PC-3 (cell line): ENCODE measurements at regions of chr21 and their contacts with region 1.

Region 1: DNA sequence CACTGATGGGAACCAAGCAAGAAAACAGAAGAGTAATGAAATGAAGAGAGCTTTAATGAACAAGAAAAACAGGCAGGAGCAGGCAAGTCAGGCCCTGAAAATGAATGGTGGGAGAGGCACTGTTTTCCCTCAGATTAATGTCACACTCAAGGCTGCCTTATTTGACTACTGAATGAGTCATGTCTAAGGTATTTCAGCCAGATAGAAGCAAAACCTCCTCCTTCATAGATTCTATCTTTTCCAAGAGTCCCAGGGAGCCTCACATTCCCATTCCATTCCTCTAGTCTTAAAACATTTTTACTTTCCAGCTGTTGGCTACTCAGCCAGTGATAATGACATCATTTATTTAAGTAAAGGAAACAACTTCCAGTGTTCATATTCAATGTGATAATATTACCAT is 228.4 kb upstream of the NRIP1 start:
- DNase-seq: peak; percentile 94
- ATAC-seq: peak; percentile 99
- H3K4me3 ChIP-seq: no peak overlapping the region
- H3K27ac ChIP-seq: peak overlapping the region; percentile 65
- H3K4me1 ChIP-seq: peaks cover 32% of the 10 kb centered on the region
- H3K27me3 ChIP-seq: no peaks in the 10 kb centered on the region
- CTCF ChIP-seq: no peak

Region 2: DNA sequence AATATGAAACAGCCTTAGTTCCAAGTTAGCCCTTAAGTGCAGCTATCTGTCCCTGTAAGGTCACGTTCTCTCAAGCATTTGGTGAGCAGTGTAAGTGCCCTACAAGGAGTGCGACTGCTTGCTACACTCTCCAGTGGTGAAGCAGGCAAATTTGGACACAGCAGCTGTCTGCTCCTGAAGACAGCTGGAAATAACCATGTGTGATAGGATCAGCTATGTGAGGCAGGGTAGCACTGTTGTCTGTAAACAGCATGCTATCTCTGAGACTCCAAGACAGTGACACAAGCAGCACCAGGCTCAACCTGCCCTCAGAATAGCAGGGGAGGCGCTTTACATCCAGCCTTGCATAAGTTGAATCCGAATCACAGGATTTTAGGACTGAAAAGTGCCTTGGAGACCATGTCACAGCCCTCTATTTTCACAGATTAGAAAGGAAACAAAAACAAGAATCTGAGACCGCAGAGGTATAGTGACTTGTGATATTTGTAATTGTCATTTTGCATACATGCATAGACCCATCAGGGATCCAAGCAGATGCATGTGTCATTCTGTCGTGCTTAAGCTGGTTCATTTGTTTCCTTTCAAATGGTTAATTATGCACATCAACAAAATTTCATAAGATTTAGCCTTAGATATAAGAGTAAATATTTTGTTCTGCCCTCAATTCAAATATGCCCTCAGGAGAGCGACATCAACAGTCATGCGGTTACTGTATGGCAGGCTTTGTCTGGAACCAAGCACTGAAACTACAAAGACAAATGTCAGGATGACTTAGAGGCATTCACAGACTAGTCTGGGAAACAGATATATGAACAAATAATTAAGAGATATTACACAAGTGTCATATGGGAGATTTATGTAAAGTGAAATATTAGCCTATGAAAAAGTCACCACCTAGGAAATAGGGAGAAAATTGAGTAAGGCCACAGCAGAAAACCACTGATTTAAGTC is 93.6 kb before region 1 on chr21:
- CTCF ChIA-PET with region 1: no interaction called
- POLR2A ChIA-PET with region 1: no interaction called
- intact Hi-C with region 1: no loop called
- DNase-seq: no peak
- ATAC-seq: no peak
- H3K4me3 ChIP-seq: no peak overlapping the region
- H3K27ac ChIP-seq: no peak overlapping the region
- H3K4me1 ChIP-seq: peaks cover 15% of the 10 kb centered on the region
- H3K27me3 ChIP-seq: no peaks in the 10 kb centered on the region
- CTCF ChIP-seq: no peak

Region 3: DNA sequence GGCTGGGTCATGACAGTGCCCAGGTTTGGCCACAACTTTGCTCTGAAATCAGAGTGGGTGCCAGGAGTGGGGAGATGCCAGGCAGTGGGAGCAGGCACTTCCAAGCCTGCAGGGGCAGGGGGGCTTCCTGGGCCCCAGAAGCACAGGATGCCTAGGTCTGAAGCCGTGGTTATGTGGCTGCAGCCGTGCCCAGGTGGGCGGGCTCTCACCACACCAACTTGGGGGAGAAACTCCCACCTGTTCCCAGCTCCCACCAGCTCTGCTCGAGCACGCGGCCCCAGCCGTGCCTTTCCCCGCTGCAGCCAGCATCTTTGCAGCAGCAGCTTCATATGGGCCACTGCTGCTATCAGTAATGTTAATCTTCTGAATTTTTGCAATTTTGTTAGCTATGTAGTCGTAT is 768.0 kb after region 1 on chr21:
- CTCF ChIA-PET with region 1: no interaction called
- POLR2A ChIA-PET with region 1: interaction called, 19 read pairs
- intact Hi-C with region 1: no loop called
- DNase-seq: no peak
- ATAC-seq: no peak
- H3K4me3 ChIP-seq: no peak overlapping the region
- H3K27ac ChIP-seq: no peak overlapping the region
- H3K4me1 ChIP-seq: no peaks in the 10 kb centered on the region
- H3K27me3 ChIP-seq: 0 out of 2 replicates have a peak, but pooled peaks cover 3% of the 10 kb centered on the region
- CTCF ChIP-seq: no peak

Region 4: GRCh38 chr21:16644685-16645084 is 1351.4 kb after region 1 on chr21:
- CTCF ChIA-PET with region 1: no interaction called
- POLR2A ChIA-PET with region 1: no interaction called
- intact Hi-C with region 1: no loop called
- DNase-seq: no peak
- ATAC-seq: no peak
- H3K4me3 ChIP-seq: no peak overlapping the region
- H3K27ac ChIP-seq: no peak overlapping the region
- H3K4me1 ChIP-seq: no peaks in the 10 kb centered on the region
- H3K27me3 ChIP-seq: 0 out of 2 replicates have a peak, but pooled peaks cover 4% of the 10 kb centered on the region
- CTCF ChIP-seq: no peak